Heart left ventricle (tissue), 16 donors: ENCODE measurements at regions of chr4 and their contacts with region 1.

Region 1: GRCh38 chr4:94451695-94452475 is at the start of gene PDLIM5:
- DNase-seq: peak; percentile 93 to 96 (median 94)
- ATAC-seq: peak; percentile 86 to 96 (median 92)
- H3K4me3 ChIP-seq: peak within 1 kb of the TSS; percentile 67 to 99 (median 92)
- H3K27ac ChIP-seq: peak within 1 kb of the TSS; percentile 96 to 100 (median 99)
- H3K4me1 ChIP-seq: peaks cover 0 to 46% (median 18%) of the 10 kb centered on the region in 12 donors
- H3K27me3 ChIP-seq: no peaks in the 10 kb centered on the region
- CTCF ChIP-seq: peak in 1 of 12 donors; percentile 3
- POLR2A ChIP-seq: peak in 1 of 2 donors; percentile 98
- total RNA-seq, gene PDLIM5: 814 to 1,378 (median 1,064) TPM

Region 2: DNA sequence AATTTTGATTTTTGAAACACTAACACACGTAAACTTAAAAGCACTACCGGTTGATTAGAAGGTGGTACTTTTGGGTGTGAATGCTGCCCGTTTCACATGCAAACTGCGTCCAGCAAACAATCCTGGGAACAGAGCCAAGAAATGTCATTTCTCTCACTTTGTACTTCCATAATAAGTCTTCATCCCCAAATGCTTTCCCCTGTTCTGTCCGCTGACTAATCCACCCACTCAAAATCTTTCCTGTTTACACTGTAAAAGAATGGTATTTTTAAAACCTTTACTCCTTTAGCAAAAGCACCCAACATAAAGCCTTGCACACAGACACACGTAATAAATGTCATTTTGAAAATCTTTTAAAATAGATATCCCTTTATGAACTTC is 39.2 kb before region 1 on chr4:
- intact Hi-C with region 1: loop called (anchors 2 to 5 kb)
- DNase-seq: peak in 1 of 5 donors; percentile 29
- ATAC-seq: peak in 1 of 4 donors; percentile 11
- H3K4me3 ChIP-seq: peak overlapping the region in 7 of 12 donors; percentile 0 to 24 (median 9)
- H3K27ac ChIP-seq: peak overlapping the region; percentile 20 to 94 (median 83)
- H3K4me1 ChIP-seq: peaks cover 4 to 61% (median 30%) of the 10 kb centered on the region in 12 donors
- H3K27me3 ChIP-seq: no peaks in the 10 kb centered on the region
- CTCF ChIP-seq: no peak
- POLR2A ChIP-seq: no peak

Region 3: GRCh38 chr4:94525993-94526728 is 74.3 kb after region 1 on chr4:
- intact Hi-C with region 1: loop called in 1 of 10 experiments (anchors 10 kb)
- DNase-seq: no peak
- ATAC-seq: peak in 1 of 4 donors; percentile 13
- H3K4me3 ChIP-seq: peak overlapping the region in 5 of 12 donors; percentile 0 to 30 (median 8)
- H3K27ac ChIP-seq: peak overlapping the region in 11 of 12 donors; percentile 25 to 77 (median 67)
- H3K4me1 ChIP-seq: peaks cover 3 to 99% (median 82%) of the 10 kb centered on the region in 12 donors
- H3K27me3 ChIP-seq: no peaks in the 10 kb centered on the region
- CTCF ChIP-seq: no peak
- POLR2A ChIP-seq: no peak

Region 4: GRCh38 chr4:94561249-94562024 is 109.6 kb after region 1 on chr4:
- intact Hi-C with region 1: loop called in 1 of 10 experiments (anchors 10 kb)
- DNase-seq: no peak
- ATAC-seq: peak; percentile 51 to 56 (median 53)
- H3K4me3 ChIP-seq: peak overlapping the region in 1 of 12 donors; percentile 11
- H3K27ac ChIP-seq: peak overlapping the region; percentile 29 to 76 (median 48)
- H3K4me1 ChIP-seq: peaks cover 6 to 79% (median 59%) of the 10 kb centered on the region in 12 donors
- H3K27me3 ChIP-seq: no peaks in the 10 kb centered on the region
- CTCF ChIP-seq: no peak
- POLR2A ChIP-seq: no peak

Region 5: DNA sequence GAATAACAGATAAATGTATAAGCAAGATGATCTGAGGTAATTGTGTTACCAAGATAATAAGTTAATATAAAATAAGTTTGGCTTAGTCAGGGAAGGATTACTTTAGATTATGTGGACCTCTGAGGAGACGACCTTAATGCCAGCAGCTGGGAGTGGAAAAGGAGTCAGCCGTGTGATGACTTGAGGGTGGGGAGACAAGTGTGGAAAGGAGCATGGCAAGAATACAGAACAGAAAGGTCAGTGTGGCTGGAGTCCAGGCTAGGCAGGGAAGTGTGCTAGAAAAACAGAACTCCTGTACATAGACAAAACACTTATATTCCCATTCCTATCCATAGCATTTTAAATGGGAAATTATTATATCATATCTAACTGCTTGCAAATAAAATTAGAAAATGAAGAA is 138.6 kb after region 1 on chr4:
- intact Hi-C with region 1: loop called in 7 of 10 experiments (anchors 2 to 10 kb)
- DNase-seq: peak in 1 of 5 donors; percentile 43
- ATAC-seq: peak; percentile 44 to 87 (median 62)
- H3K4me3 ChIP-seq: no peak overlapping the region
- H3K27ac ChIP-seq: peak overlapping the region in 3 of 12 donors; percentile 11 to 30 (median 15)
- H3K4me1 ChIP-seq: peaks cover 0 to 34% (median 16%) of the 10 kb centered on the region in 12 donors
- H3K27me3 ChIP-seq: no peaks in the 10 kb centered on the region
- CTCF ChIP-seq: no peak
- POLR2A ChIP-seq: no peak

Region 6: GRCh38 chr4:94603170-94603747 is 151.4 kb after region 1 on chr4:
- intact Hi-C with region 1: loop called in 5 of 10 experiments (anchors 5 to 10 kb)
- DNase-seq: peak in 4 of 5 donors; percentile 27 to 52 (median 40)
- ATAC-seq: peak; percentile 45 to 61 (median 54)
- H3K4me3 ChIP-seq: no peak overlapping the region
- H3K27ac ChIP-seq: peak overlapping the region in 7 of 12 donors; percentile 11 to 62 (median 26)
- H3K4me1 ChIP-seq: peaks cover 0 to 29% (median 10%) of the 10 kb centered on the region in 12 donors
- H3K27me3 ChIP-seq: no peaks in the 10 kb centered on the region
- CTCF ChIP-seq: no peak
- POLR2A ChIP-seq: no peak